ENCODE measurements at regions of chr20 and their contacts with region 1.

Region 1: GRCh38 chr20:10673988-10674711 is at the start of gene JAG1:
- DNase-seq: peak; percentile 93
- H3K4me3 Mint-ChIP-seq: peak within 1 kb of the TSS; percentile 93
- H3K27ac Mint-ChIP-seq: peak within 1 kb of the TSS; percentile 88
- H3K4me1 Mint-ChIP-seq: peaks cover 30% of the 10 kb centered on the region
- H3K27me3 Mint-ChIP-seq: peaks cover 67% of the 10 kb centered on the region
- total RNA-seq, gene JAG1: 1.1 and 1.3 TPM in 2 replicates

Region 2: GRCh38 chr20:10603971-10604864 is 69.9 kb before region 1 on chr20:
- intact Hi-C with region 1: loop called (anchors 1 kb)
- DNase-seq: no peak
- H3K4me3 Mint-ChIP-seq: no peak overlapping the region
- H3K27ac Mint-ChIP-seq: peak overlapping the region; percentile 36
- H3K4me1 Mint-ChIP-seq: peaks cover 14% of the 10 kb centered on the region
- H3K27me3 Mint-ChIP-seq: no peaks in the 10 kb centered on the region

Measured in activated CD4-positive, alpha-beta T cell treated with anti-CD3 and anti-CD28 coated beads, Interleukin-2, amount 10 ng/mL, durations not matched to agents 24 days and 14 days (primary cell).